Cardiac septum (tissue), 1 donor: ENCODE measurements at regions of chr3 and their contacts with region 1.

Region 1: GRCh38 chr3:147680837-147681483 is 271.8 kb downstream of the ZIC1 start:
- DNase-seq: peak; percentile 82

Region 2: GRCh38 chr3:147652651-147653366 is 28.2 kb before region 1 on chr3:
- intact Hi-C with region 1: loop called (anchors 2 kb)
- DNase-seq: no peak

Region 3: DNA sequence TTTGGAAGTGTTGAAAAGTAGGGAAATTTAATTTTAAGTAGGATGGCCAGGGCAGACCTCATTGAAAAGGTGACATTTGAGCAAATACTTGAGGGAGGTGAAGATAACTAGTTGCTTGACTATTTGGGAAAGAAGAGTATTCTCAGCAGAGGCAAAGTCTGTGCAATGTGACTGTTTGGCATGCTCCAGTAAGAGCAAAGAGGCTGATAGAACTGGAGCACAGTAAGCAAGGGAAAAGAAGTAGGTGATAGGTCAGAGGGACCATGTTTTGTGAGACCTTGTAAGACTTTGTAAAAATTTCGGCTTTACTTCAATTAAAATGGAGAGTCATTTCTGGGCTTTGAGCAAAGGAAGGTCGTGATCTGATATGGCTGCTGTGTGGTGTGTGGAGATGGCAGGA is 64.0 kb after region 1 on chr3:
- intact Hi-C with region 1: no loop called
- DNase-seq: no peak